HCT116 (cell line): ENCODE measurements at regions of chr1 and their contacts with region 1.

Region 1: GRCh38 chr1:246689409-246690008 is 34.7 kb upstream of the SCCPDH start:
- DNase-seq: peak; percentile 52
- ATAC-seq: peak; percentile 97
- H3K4me3 ChIP-seq: peak overlapping the region; percentile 23 to 35; a peak in 3 of 4 replicates
- H3K27ac ChIP-seq: no peak overlapping the region
- H3K4me1 ChIP-seq: peaks cover 3 to 8% of the 10 kb centered on the region in 2 experiments; a peak in 3 of 4 replicates
- H3K27me3 ChIP-seq: no peaks in the 10 kb centered on the region
- CTCF ChIP-seq: peak; percentile 80 to 84 (median 80)
- POLR2A ChIP-seq: no peak
- RAD21 ChIP-seq: peak; percentile 86

Region 2: DNA sequence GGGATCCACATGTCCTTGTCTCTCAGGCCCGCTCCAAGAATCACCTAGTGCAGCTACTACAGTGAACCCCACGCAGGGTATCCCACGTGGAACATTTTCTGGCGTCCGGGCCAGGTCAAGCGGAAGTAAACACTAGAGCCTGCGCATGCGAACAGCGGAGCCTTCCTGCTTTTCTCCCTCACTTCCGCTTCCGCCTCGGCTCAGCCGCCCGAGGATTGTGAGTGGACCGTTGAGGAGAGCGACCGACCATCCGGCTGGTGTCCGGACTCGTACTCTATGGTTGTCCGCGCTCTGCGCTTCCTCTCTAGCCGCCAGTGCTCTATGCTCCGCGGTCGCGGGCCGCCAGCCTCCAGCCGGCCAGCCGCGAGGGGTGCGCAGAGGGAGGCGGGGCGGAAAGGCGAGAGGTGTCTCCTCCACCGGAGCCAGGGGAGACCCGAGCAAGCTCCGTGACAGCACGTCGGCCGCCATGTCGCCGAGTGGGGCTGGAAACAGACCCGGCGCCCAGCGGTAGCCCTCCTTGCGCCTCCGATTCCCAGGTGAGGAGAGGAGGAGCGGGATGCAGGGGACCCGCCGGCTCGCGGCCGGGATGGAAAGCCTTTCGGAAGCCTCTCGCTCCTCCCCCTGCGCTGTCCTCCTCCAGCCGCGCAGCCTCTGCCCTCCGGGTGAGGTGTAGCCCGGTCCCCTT is 123.2 kb before region 1 on chr1 and contains the starts of genes CNST and TFB2M:
- CTCF ChIA-PET with region 1: no interaction called
- POLR2A ChIA-PET with region 1: no interaction called
- RAD21 ChIA-PET with region 1: no interaction called
- intact Hi-C with region 1: loop called (anchors 2 kb)
- DNase-seq: peak; percentile 97
- ATAC-seq: peak; percentile 95
- H3K4me3 ChIP-seq: peak within 1 kb of the TSS; percentile 73 to 92
- H3K27ac ChIP-seq: peak within 1 kb of the TSS; percentile 82
- H3K4me1 ChIP-seq: peaks cover 10 to 16% of the 10 kb centered on the region in 2 experiments
- H3K27me3 ChIP-seq: no peaks in the 10 kb centered on the region
- CTCF ChIP-seq: no peak
- POLR2A ChIP-seq: peak; percentile 43
- RAD21 ChIP-seq: no peak
- total RNA-seq, gene CNST: 13.5 TPM
- total RNA-seq, gene TFB2M: 24.4 TPM

Region 3: DNA sequence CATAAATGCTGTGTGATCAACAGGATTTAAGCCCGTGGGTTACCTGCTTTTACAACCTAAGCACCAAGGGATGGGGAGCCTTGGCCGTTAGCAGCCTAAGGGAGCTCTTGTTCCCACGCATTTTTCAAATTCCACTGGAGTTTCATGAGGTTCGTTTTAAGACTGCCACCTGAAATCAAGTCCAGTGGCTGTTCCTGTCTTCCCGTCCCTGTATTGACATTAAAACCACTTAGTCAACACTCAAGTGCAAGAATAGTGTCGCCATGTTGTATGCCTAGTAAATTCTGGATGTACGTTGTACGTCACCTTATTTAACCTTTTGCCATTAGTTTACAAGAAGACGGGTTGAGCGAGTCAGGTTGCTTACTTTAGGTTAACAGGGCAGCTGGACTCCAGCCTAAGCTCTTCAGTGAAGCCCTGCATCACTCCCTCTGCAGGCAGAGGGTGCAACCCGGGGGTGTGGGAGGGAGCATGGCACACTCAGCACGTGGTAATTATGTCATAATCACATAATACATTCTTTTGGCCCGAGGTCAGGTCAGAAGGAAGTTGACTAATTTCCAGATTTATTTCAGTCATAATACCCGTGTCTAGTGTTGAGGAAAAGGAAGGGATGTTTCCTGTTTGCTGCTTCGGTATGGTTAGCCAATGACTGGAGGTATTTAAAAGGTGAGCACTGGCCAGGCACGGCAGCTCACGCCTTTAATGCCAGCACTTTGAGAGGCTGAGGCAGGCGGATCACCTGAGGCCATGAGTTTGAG is 80.7 kb before region 1 on chr1:
- CTCF ChIA-PET with region 1: no interaction called
- POLR2A ChIA-PET with region 1: no interaction called
- RAD21 ChIA-PET with region 1: no interaction called
- intact Hi-C with region 1: no loop called
- DNase-seq: peak; percentile 56
- ATAC-seq: peak; percentile 92
- H3K4me3 ChIP-seq: peak overlapping the region in 1 of 2 experiments; percentile 19; a peak in 2 of 4 replicates
- H3K27ac ChIP-seq: peak overlapping the region; percentile 37
- H3K4me1 ChIP-seq: peaks cover 16 to 17% of the 10 kb centered on the region in 2 experiments
- H3K27me3 ChIP-seq: no peaks in the 10 kb centered on the region
- CTCF ChIP-seq: peak in 2 of 3 experiments; percentile 10; a peak in 1 of 6 replicates
- POLR2A ChIP-seq: no peak
- RAD21 ChIP-seq: peak; percentile 16; the same call in 1 of the 2 replicates

Region 4: DNA sequence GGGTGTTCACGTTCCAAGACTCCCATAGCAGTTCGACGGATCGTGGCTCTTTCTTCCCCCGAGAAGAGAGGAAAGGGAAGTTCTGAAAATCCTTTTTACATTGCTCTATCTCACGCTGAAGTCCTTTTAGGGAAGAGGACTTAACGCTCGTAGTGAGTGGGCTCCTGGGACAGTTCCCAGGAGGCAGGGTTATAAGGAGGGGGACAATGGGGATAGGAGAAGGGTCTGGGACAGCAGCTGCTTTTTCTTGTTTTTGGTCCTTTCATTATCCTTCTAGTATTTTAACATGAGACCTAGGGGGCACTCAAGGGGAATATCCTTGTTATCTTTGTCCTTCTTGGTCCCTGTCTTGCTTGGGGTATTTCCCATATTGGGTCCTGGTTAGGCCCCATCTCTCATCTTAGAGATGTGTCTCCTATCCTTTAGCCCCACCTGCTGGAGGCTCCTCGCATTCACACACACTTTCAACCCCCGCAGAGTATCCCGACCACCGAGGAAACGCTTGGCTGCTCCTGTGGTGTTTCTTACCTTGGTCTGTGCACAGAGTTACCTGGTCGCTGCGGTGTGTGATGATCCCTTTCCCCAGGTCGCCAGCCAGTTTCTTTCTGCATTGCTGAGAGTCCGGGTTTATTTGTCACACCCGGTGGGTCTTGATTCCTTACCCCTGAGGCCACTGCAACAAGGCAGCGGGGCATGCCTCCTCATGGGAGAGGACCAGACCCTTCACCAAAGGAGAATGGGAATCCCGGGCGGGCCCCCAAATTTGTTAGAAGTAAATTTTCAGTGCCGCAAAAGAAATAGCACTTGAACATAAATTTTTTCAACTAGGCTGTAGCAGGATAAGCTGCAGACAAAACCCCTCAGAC is 64.4 kb after region 1 on chr1:
- CTCF ChIA-PET with region 1: interaction called, 3 read pairs
- POLR2A ChIA-PET with region 1: no interaction called
- RAD21 ChIA-PET with region 1: no interaction called
- intact Hi-C with region 1: loop called (anchors 2 kb)
- DNase-seq: peak; percentile 52
- ATAC-seq: peak; percentile 98
- H3K4me3 ChIP-seq: peak overlapping the region; percentile 9 to 33; a peak in 2 of 4 replicates
- H3K27ac ChIP-seq: no peak overlapping the region
- H3K4me1 ChIP-seq: 0 out of 4 replicates have a peak, but pooled peaks cover 0 to 3% of the 10 kb centered on the region in 2 experiments
- H3K27me3 ChIP-seq: no peaks in the 10 kb centered on the region
- CTCF ChIP-seq: peak; percentile 71 to 82 (median 78)
- POLR2A ChIP-seq: no peak
- RAD21 ChIP-seq: peak; percentile 92